ENCODE measurements at regions of chr19 and their contacts with region 1.

Region 1: GRCh38 chr19:3479177-3479833 is 1.0 kb downstream of the SMIM24 start:
- DNase-seq: peak in 8 of 9 experiments; percentile 24 to 81 (median 54)
- ATAC-seq: peak; percentile 84
- H3K4me3 ChIP-seq: peak overlapping the region; percentile 33 to 43
- H3K4me3 Mint-ChIP-seq: no peak overlapping the region
- H3K27ac ChIP-seq: no peak overlapping the region
- H3K27ac Mint-ChIP-seq: no peak overlapping the region
- H3K4me1 ChIP-seq: peaks cover 18% of the 10 kb centered on the region
- H3K4me1 Mint-ChIP-seq: peaks cover 10% of the 10 kb centered on the region
- H3K27me3 ChIP-seq: no peaks in the 10 kb centered on the region
- H3K27me3 Mint-ChIP-seq: no peaks in the 10 kb centered on the region
- CTCF ChIP-seq: no peak

Region 2: GRCh38 chr19:3314962-3315675 is 164.2 kb before region 1 on chr19:
- CTCF ChIA-PET with region 1: no interaction called
- POLR2A ChIA-PET with region 1: no interaction called
- intact Hi-C with region 1: no loop called
- DNase-seq: no peak
- ATAC-seq: no peak
- H3K4me3 ChIP-seq: no peak overlapping the region
- H3K4me3 Mint-ChIP-seq: no peak overlapping the region
- H3K27ac ChIP-seq: no peak overlapping the region
- H3K27ac Mint-ChIP-seq: no peak overlapping the region
- H3K4me1 ChIP-seq: no peaks in the 10 kb centered on the region
- H3K4me1 Mint-ChIP-seq: no peaks in the 10 kb centered on the region
- H3K27me3 ChIP-seq: peaks cover 10 to 27% of the 10 kb centered on the region in 2 experiments
- H3K27me3 Mint-ChIP-seq: peaks cover 28% of the 10 kb centered on the region
- CTCF ChIP-seq: no peak

Region 3: DNA sequence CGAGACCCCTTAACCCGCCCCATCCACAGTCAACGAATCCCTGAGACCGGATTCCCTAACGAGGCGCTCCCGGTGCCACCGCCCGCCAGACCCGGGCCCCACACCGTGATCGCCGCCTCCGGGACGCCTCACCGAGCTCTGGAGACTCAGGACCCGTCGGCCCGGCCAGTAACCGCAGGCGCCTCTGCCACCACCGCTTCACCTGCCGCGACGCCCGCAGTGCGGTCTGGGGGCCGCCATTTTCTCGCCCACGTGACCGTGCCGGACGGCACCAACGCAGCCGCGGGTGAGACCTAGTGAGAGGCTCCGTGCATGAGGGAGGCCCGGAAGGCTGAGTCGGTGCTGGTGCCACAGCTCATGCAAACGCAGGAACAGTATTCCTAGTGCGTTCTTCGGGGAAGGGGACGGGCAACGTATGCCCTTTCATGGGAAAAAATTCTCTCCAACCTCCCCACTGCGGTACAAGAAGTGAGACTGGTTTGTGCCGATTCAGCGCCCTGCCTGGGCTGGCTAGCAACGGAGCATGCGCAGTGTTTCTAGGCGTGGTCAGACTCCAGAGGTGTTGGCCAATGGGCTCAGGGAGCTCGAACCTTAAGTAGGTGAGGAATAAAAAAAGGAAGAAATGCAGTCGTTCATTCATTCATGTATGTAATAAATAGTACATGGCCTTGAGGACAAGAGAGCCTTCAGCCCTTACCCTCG is 21.3 kb after region 1 on chr19 and contains the start of gene DOHH:
- CTCF ChIA-PET with region 1: interaction called, 19 read pairs
- POLR2A ChIA-PET with region 1: no interaction called
- intact Hi-C with region 1: no loop called
- DNase-seq: peak; percentile 88 to 98 (median 96)
- ATAC-seq: peak; percentile 84
- H3K4me3 ChIP-seq: peak within 1 kb of the TSS; percentile 57 to 95
- H3K4me3 Mint-ChIP-seq: peak within 1 kb of the TSS; percentile 93
- H3K27ac ChIP-seq: peak within 1 kb of the TSS; percentile 85 to 96
- H3K27ac Mint-ChIP-seq: peak within 1 kb of the TSS; percentile 99
- H3K4me1 ChIP-seq: peaks cover 19% of the 10 kb centered on the region
- H3K4me1 Mint-ChIP-seq: peaks cover 35% of the 10 kb centered on the region
- H3K27me3 ChIP-seq: no peaks in the 10 kb centered on the region
- H3K27me3 Mint-ChIP-seq: no peaks in the 10 kb centered on the region
- CTCF ChIP-seq: no peak
- total RNA-seq, gene DOHH: 3.4 to 3.9 TPM

Region 4: DNA sequence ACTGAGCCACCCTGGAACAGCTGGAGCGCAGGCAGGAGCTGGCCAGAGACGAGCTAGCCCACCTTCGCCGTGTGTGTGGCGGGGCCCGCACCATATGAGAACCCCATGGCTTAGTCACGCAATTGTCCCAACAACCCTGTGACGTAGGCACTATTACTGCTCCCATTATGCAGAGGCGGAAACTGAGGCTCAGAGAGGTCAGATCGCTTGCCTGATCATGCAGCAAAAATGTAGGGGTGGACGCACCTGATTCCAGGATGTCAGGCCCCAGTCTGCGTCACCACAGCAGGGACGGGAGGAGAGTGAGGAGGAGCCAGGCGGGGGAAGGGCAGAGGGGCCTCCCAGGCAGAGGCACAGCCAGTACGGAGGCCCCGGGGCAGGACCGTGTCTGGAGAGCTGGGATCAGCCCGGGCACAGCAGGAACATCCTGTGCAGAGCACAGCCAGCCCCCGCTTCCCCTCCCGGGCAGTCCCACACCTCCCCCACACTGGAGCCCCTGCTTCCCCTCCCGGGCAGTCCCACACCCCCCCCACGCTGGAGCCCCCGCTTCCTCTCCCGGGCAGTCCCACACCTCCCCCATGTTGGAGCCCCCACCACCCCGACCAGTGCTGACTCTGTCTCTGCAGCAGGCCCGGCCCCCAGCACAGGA is 204.2 kb after region 1 on chr19:
- CTCF ChIA-PET with region 1: no interaction called
- POLR2A ChIA-PET with region 1: no interaction called
- intact Hi-C with region 1: no loop called
- DNase-seq: no peak
- ATAC-seq: no peak
- H3K4me3 ChIP-seq: no peak overlapping the region
- H3K4me3 Mint-ChIP-seq: peak overlapping the region; percentile 3
- H3K27ac ChIP-seq: no peak overlapping the region
- H3K27ac Mint-ChIP-seq: no peak overlapping the region
- H3K4me1 ChIP-seq: peaks cover 23% of the 10 kb centered on the region
- H3K4me1 Mint-ChIP-seq: peaks cover 22% of the 10 kb centered on the region
- H3K27me3 ChIP-seq: no peaks in the 10 kb centered on the region
- H3K27me3 Mint-ChIP-seq: no peaks in the 10 kb centered on the region
- CTCF ChIP-seq: no peak

Region 5: DNA sequence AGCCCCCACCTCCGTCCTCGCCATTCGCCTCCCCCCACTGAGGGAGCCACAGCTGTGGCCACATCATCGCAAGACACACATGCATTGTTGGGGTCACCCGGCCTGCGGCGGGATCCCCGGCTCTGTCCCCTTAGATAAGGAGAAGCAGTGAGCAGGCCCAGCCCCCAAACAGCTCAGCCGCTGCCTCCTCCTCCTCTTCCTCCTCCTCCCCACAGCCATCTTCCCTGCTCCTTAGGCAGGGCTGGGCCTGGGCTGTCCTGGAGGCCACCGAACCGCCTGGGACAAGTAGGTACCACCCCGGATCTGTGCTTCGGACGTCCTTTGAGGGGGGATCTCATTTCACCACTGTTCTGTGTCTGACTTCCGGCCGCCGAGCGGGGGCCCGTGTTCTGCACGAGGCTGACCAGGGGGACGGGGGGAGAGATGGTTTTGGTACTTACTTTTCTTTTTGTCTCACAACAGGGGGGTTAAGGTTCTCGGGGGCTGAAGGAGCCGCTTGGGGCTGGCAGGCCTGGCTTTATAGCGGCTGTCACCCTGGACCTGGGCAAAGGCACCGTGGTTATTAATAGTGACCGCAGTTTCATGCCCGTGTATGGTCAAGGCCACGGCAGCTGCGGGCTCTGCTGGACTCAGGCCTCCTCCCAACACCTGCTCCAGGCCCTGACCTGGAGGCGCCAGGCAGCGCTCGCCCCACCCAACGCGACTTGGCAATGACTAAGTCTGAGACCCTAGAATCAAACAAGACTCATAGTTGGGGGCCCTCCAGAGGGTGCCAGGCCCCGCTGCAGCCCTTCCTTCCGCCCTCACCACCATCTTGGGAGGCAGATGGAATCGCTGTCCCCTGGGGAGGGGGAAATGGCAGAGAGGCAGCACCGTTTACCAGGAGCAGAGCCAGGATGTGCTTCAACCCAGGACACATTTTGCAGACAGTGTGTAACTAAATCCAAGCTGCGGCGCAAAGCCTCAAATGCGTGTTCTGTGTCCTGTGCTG is 471.9 kb after region 1 on chr19:
- CTCF ChIA-PET with region 1: no interaction called
- POLR2A ChIA-PET with region 1: no interaction called
- intact Hi-C with region 1: no loop called
- DNase-seq: peak in 3 of 9 experiments; percentile 21 to 56 (median 27)
- ATAC-seq: peak; percentile 29
- H3K4me3 ChIP-seq: peak overlapping the region in 1 of 2 experiments; percentile 26
- H3K4me3 Mint-ChIP-seq: peak overlapping the region; percentile 78
- H3K27ac ChIP-seq: peak overlapping the region in 1 of 2 experiments; percentile 28
- H3K27ac Mint-ChIP-seq: peak overlapping the region; percentile 75
- H3K4me1 ChIP-seq: peaks cover 14% of the 10 kb centered on the region
- H3K4me1 Mint-ChIP-seq: peaks cover 10% of the 10 kb centered on the region
- H3K27me3 ChIP-seq: no peaks in the 10 kb centered on the region
- H3K27me3 Mint-ChIP-seq: no peaks in the 10 kb centered on the region
- CTCF ChIP-seq: no peak

Region 6: GRCh38 chr19:4065430-4066175 is 586.3 kb after region 1 on chr19:
- CTCF ChIA-PET with region 1: no interaction called
- POLR2A ChIA-PET with region 1: no interaction called
- intact Hi-C with region 1: no loop called
- DNase-seq: peak; percentile 94 to 99 (median 97)
- ATAC-seq: peak; percentile 72
- H3K4me3 ChIP-seq: peak overlapping the region; percentile 86 to 89
- H3K4me3 Mint-ChIP-seq: peak overlapping the region; percentile 73
- H3K27ac ChIP-seq: no peak overlapping the region
- H3K27ac Mint-ChIP-seq: no peak overlapping the region
- H3K4me1 ChIP-seq: peaks cover 58% of the 10 kb centered on the region
- H3K4me1 Mint-ChIP-seq: peaks cover 40% of the 10 kb centered on the region
- H3K27me3 ChIP-seq: no peaks in the 10 kb centered on the region
- H3K27me3 Mint-ChIP-seq: no peaks in the 10 kb centered on the region
- CTCF ChIP-seq: no peak